ENCODE measurements at regions of chr7 and their contacts with region 1.

Region 1: GRCh38 chr7:26864309-26865093 is at the start of gene SKAP2:
- DNase-seq: peak; percentile 99
- ATAC-seq: peak; percentile 98
- H3K4me3 ChIP-seq: peak within 1 kb of the TSS; percentile 73
- H3K27ac ChIP-seq: peak within 1 kb of the TSS; percentile 77
- H3K4me1 ChIP-seq: no peaks in the 10 kb centered on the region
- H3K27me3 ChIP-seq: no peaks in the 10 kb centered on the region
- CTCF ChIP-seq: no peak
- POLR2A ChIP-seq: peak; percentile 85
- RAD21 ChIP-seq: no peak
- total RNA-seq, gene SKAP2: 5.7 and 11.1 TPM in 2 replicates

Region 2: GRCh38 chr7:26337232-26337865 is 527.2 kb before region 1 on chr7:
- CTCF ChIA-PET with region 1: no interaction called
- POLR2A ChIA-PET with region 1: no interaction called
- dilution Hi-C with region 1: no loop called
- in situ Hi-C with region 1: no loop called
- intact Hi-C with region 1: no loop called
- DNase-seq: no peak
- ATAC-seq: no peak
- H3K4me3 ChIP-seq: no peak overlapping the region
- H3K27ac ChIP-seq: no peak overlapping the region
- H3K4me1 ChIP-seq: no peaks in the 10 kb centered on the region
- H3K27me3 ChIP-seq: no peaks in the 10 kb centered on the region
- CTCF ChIP-seq: no peak
- POLR2A ChIP-seq: no peak
- RAD21 ChIP-seq: no peak

Region 3: DNA sequence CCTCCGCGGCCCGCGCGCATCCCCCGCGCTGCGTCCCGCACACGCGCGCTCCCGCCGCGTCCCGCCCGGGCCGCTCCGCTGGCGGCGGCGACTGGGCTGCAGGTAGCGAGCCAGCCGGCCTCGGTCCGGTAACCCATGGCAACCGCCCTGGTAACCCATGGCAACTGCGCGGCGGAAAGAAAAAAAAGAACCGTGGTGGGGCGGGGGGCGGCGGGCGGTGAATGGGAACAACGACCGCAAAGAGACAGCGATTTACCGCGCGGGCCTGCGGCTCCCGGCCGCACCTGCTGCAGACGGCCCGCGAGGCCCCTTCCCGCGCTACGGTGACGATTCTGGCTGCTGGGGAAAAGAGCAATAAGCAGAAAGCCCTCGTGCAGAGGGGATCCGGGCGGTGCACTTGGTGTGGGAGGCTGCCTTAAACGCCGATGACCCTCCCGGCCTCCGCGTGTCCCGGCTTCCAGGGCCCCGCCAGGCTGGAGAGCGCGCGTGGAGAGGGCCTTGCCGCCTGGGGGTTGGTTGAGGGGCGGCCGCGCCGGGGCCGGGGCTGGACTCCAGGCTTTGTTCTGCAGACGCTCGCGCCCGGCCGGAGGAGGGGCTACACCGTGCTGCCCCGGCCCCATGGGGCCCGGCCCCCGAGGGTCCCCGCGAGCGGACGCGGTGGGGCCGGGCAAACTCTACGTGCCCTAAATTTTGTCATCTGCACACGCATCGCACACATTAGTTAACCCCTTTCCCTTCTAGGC is 488.2 kb before region 1 on chr7:
- CTCF ChIA-PET with region 1: no interaction called
- POLR2A ChIA-PET with region 1: no interaction called
- dilution Hi-C with region 1: no loop called
- in situ Hi-C with region 1: no loop called
- intact Hi-C with region 1: loop called (anchors 10 kb)
- DNase-seq: no peak
- ATAC-seq: no peak
- H3K4me3 ChIP-seq: no peak overlapping the region
- H3K27ac ChIP-seq: no peak overlapping the region
- H3K4me1 ChIP-seq: no peaks in the 10 kb centered on the region
- H3K27me3 ChIP-seq: peaks cover 41% of the 10 kb centered on the region
- CTCF ChIP-seq: no peak
- POLR2A ChIP-seq: no peak
- RAD21 ChIP-seq: no peak

Measured in IMR-90 (cell line).